ENCODE measurements at regions of chr13 and their contacts with region 1.

Region 1: DNA sequence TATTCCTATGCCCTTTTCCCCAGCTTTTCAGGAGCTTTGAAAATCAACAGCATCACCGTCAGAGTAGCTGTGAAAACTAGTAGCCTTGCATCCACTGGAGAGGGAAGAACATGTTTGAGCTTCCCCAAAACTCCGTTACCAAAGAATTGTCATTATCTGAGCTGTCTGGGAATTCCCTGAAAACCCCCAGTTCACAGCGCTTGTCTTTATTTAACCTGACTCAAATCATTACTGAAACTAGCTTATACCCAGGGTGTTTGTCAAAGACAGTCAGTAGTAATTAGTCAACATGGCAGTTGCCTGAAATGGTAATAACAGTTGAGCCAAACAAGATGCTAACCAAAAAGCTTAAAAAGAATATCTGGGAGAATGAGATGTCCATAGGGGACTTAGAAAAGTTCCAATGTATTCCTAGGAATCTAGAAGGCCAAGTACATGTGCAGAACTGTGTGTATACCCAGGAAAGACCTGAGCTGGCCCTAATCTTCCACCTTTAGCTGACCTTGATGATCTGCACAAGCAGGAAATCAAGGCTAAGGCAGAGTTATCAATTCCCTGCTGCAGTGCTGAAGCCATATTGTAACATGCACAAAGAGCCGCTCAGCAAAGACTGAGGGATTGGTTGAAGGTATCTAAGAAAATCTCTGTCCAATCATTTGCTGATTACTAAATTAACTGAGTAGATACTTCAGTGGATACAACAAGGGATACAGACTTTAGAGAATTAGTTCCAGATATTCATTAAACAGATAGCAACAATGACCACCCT is 130.8 kb downstream of the KL start:
- DNase-seq: peak; percentile 75
- H3K4me3 Mint-ChIP-seq: peak overlapping the region; percentile 35
- H3K27ac Mint-ChIP-seq: peak overlapping the region; percentile 90
- H3K4me1 Mint-ChIP-seq: peaks cover 28% of the 10 kb centered on the region
- H3K27me3 Mint-ChIP-seq: no peaks in the 10 kb centered on the region

Region 2: DNA sequence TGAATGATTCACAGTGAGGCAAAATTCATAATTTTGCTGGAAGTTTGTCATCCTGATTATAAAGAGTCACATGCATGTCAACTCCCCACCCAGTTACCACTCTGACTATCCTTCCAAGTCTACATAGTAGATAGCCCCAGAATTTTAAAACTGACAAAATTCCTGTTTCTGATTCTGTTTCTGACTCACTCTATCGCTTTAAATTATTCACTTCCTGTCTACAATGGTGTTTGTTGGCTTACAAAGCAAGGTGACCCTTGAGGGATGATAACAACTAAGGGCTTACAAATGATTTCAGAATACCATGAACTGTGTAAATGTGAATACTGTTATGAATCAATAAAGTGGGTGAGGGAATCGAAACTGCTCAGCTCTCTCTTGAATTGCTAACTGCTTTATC is 229.5 kb before region 1 on chr13:
- intact Hi-C with region 1: loop called (anchors 5 kb)
- DNase-seq: no peak
- H3K4me3 Mint-ChIP-seq: no peak overlapping the region
- H3K27ac Mint-ChIP-seq: peak overlapping the region; percentile 57
- H3K4me1 Mint-ChIP-seq: peaks cover 10% of the 10 kb centered on the region
- H3K27me3 Mint-ChIP-seq: no peaks in the 10 kb centered on the region

Region 3: GRCh38 chr13:33033051-33033812 is 113.8 kb before region 1 on chr13:
- intact Hi-C with region 1: no loop called
- DNase-seq: peak; percentile 73
- H3K4me3 Mint-ChIP-seq: peak overlapping the region; percentile 84
- H3K27ac Mint-ChIP-seq: peak overlapping the region; percentile 89
- H3K4me1 Mint-ChIP-seq: peaks cover 10% of the 10 kb centered on the region
- H3K27me3 Mint-ChIP-seq: peaks cover 4% of the 10 kb centered on the region

Region 4: DNA sequence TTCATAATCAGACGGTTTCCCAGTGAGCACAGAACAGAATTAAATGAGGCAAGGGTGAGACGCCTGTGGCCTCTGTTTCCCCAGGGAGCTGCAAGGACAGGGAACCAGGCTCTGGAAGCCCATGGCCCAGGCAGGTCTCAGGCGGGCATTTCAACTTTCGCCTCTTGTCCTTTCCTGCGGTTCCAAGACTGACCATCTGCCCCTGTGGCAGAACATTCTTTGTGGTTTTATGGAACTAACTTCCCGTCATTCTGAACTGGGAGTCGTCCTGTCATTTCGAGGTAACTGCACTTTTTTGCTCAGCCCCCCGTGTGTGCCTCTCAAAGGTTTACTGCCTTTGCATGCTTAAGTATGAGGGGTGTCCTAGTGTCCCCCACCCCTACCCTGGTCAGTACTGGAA is 59.9 kb before region 1 on chr13:
- intact Hi-C with region 1: loop called (anchors 2 kb)
- DNase-seq: no peak
- H3K4me3 Mint-ChIP-seq: peak overlapping the region; percentile 66
- H3K27ac Mint-ChIP-seq: peak overlapping the region; percentile 83
- H3K4me1 Mint-ChIP-seq: peaks cover 22% of the 10 kb centered on the region
- H3K27me3 Mint-ChIP-seq: peaks cover 2% of the 10 kb centered on the region

Region 5: GRCh38 chr13:33132644-33133440 is 14.2 kb before region 1 on chr13:
- intact Hi-C with region 1: loop called (anchors 1 kb)
- DNase-seq: no peak
- H3K4me3 Mint-ChIP-seq: no peak overlapping the region
- H3K27ac Mint-ChIP-seq: peak overlapping the region; percentile 89
- H3K4me1 Mint-ChIP-seq: peaks cover 8% of the 10 kb centered on the region
- H3K27me3 Mint-ChIP-seq: no peaks in the 10 kb centered on the region

Region 6: GRCh38 chr13:33204130-33204927 is 57.3 kb after region 1 on chr13:
- intact Hi-C with region 1: loop called (anchors 1 kb)
- DNase-seq: no peak
- H3K4me3 Mint-ChIP-seq: peak overlapping the region; percentile 82
- H3K27ac Mint-ChIP-seq: peak overlapping the region; percentile 87
- H3K4me1 Mint-ChIP-seq: peaks cover 49% of the 10 kb centered on the region
- H3K27me3 Mint-ChIP-seq: no peaks in the 10 kb centered on the region

Measured in activated CD4-positive, alpha-beta T cell treated with anti-CD3 and anti-CD28 coated beads, Interleukin-2, amount 10 ng/mL, durations not matched to agents 24 days and 14 days (primary cell).